Body of pancreas (tissue), 4 donors: ENCODE measurements at regions of chr6 and their contacts with region 1.

Region 1: DNA sequence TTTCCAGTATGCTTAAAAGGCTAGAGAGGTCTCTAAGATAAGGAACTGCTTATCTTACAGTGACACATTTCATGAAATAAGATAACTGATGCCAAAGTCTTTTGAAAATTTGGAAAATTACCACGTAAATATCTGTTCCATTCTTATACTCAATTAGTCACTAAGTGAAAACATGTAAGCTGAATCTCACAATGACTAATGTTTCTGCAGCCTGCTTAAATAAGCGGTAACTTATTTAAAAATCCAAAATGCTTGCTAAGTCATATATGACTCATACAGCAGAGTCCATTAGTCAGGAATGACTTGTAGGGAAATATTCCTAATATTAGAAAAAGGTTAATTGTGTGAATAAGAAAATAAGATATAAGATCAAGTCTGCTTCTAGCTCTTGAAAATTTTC is 27.8 kb upstream of the LGSN start:
- DNase-seq: no peak
- ATAC-seq: no peak
- H3K4me3 ChIP-seq: no peak overlapping the region
- H3K27ac ChIP-seq: no peak overlapping the region
- H3K4me1 ChIP-seq: peaks cover 5% of the 10 kb centered on the region
- H3K27me3 ChIP-seq: no peaks in the 10 kb centered on the region
- CTCF ChIP-seq: no peak
- POLR2A ChIP-seq: no peak

Region 2: GRCh38 chr6:63236398-63236817 is 111.2 kb before region 1 on chr6:
- intact Hi-C with region 1: no loop called
- DNase-seq: no peak
- ATAC-seq: no peak
- H3K4me3 ChIP-seq: no peak overlapping the region
- H3K27ac ChIP-seq: no peak overlapping the region
- H3K4me1 ChIP-seq: no peaks in the 10 kb centered on the region
- H3K27me3 ChIP-seq: no peaks in the 10 kb centered on the region
- CTCF ChIP-seq: no peak
- POLR2A ChIP-seq: no peak

Region 3: DNA sequence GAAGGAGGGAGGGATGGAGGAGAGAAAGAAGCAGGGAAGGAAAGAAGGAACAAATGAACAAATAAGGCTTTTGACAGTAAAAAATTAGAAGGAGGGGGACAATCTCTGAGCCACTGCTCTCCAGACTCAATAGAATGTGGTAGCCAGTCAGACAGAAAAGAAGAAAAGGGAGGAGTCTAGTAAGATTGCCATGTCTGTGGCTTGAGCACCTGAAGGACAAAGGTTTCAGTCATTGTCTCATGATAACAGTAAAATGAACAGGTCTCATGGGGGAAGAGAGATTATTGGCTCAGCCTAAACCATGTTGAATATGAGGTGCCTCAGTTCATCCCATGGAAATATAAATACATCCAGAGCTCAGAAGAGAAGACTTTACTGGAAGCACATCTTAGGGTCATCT is 210.7 kb after region 1 on chr6:
- intact Hi-C with region 1: no loop called
- DNase-seq: no peak
- ATAC-seq: no peak
- H3K4me3 ChIP-seq: no peak overlapping the region
- H3K27ac ChIP-seq: no peak overlapping the region
- H3K4me1 ChIP-seq: peaks cover 16% of the 10 kb centered on the region
- H3K27me3 ChIP-seq: no peaks in the 10 kb centered on the region
- CTCF ChIP-seq: no peak
- POLR2A ChIP-seq: no peak

Region 4: GRCh38 chr6:63598049-63599036 is 250.7 kb after region 1 on chr6:
- intact Hi-C with region 1: loop called (anchors 10 kb)
- DNase-seq: peak; percentile 72 to 82 (median 76)
- ATAC-seq: peak; percentile 98
- H3K4me3 ChIP-seq: peak overlapping the region; percentile 38 to 40
- H3K27ac ChIP-seq: peak overlapping the region in 3 of 4 donors; percentile 54 to 63 (median 55)
- H3K4me1 ChIP-seq: peaks cover 4% of the 10 kb centered on the region
- H3K27me3 ChIP-seq: no peaks in the 10 kb centered on the region
- CTCF ChIP-seq: peak; percentile 62 to 95 (median 82)
- POLR2A ChIP-seq: no peak